CD4-positive, alpha-beta memory T cell (primary cell): ENCODE measurements at regions of chr11 and their contacts with region 1.

Region 1: DNA sequence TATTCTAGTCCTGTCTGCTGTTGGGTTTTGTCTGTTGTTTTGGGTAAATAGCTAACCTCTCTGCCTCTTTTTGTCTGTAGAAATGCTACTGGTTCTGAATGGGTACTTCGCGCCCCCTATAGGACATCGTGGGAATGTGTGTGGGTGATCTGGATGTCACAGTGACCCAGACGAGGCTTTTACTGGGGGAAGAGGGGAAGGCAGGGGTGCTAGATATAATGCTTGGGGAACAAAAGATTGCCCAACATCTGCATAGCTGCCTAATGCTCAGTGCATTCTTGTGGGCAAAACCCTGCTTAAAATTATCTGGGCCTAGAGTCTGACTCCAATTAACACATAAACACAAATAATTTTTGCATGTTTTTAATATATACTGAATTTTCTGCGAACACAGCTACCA is 57.7 kb downstream of the BMAL1 start:
- DNase-seq: peak; percentile 70 to 73 (median 71)
- H3K4me3 ChIP-seq: no peak overlapping the region
- H3K4me3 Mint-ChIP-seq: peak overlapping the region in 2 of 8 donors; percentile 2 to 9
- H3K27ac ChIP-seq: no peak overlapping the region
- H3K27ac Mint-ChIP-seq: peak overlapping the region; percentile 0 to 87 (median 26)
- H3K4me1 ChIP-seq: peaks cover 90% of the 10 kb centered on the region
- H3K4me1 Mint-ChIP-seq: peaks cover 60 to 89% (median 75%) of the 10 kb centered on the region in 4 donors
- H3K27me3 ChIP-seq: no peaks in the 10 kb centered on the region
- H3K27me3 Mint-ChIP-seq: no peaks in the 10 kb centered on the region

Region 2: DNA sequence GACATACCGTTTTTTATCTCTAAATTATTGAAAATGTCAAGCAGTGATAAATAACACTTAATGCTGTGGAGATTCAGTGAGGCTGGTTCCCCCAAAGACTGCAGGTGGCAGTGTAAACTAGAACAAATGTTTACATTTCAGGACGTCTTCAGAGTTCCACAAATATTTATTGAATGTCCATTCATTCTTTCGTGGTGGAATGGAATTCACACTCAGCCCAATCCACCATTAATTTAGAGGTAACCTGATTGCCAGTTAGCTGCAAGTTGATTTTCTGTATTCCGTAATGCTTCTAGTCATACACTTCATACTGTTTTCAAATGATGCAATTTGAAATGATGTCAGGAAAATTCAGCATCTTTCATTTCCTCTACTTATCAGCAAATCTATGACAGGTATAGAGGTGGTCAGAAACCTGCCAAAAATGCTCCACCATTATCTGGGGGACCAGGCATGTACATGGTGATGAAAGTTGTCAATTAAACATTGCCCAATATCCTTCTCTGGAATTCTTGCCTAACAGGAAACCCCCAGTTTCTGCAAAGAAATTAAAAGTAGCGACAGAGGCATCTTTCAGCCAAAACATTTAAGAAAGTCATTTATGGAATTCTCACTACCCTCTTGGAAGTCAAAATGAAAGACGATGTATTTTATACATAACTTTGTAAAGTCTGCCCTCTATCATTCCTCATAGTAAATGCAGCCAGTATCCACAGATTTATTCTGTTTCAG is 152.1 kb before region 1 on chr11:
- CTCF ChIA-PET with region 1: interaction called, 5 read pairs
- POLR2A ChIA-PET with region 1: no interaction called
- intact Hi-C with region 1: loop called (anchors 1 kb)
- DNase-seq: peak in 4 of 5 donors; percentile 12 to 32 (median 24)
- H3K4me3 ChIP-seq: no peak overlapping the region
- H3K4me3 Mint-ChIP-seq: peak overlapping the region in 7 of 8 donors; percentile 44 to 65 (median 60)
- H3K27ac ChIP-seq: no peak overlapping the region
- H3K27ac Mint-ChIP-seq: no peak overlapping the region
- H3K4me1 ChIP-seq: peaks cover 7% of the 10 kb centered on the region
- H3K4me1 Mint-ChIP-seq: peaks cover 3 to 6% (median 6%) of the 10 kb centered on the region in 4 donors
- H3K27me3 ChIP-seq: no peaks in the 10 kb centered on the region
- H3K27me3 Mint-ChIP-seq: peaks cover 8 to 12% of the 10 kb centered on the region in 2 donors

Region 3: DNA sequence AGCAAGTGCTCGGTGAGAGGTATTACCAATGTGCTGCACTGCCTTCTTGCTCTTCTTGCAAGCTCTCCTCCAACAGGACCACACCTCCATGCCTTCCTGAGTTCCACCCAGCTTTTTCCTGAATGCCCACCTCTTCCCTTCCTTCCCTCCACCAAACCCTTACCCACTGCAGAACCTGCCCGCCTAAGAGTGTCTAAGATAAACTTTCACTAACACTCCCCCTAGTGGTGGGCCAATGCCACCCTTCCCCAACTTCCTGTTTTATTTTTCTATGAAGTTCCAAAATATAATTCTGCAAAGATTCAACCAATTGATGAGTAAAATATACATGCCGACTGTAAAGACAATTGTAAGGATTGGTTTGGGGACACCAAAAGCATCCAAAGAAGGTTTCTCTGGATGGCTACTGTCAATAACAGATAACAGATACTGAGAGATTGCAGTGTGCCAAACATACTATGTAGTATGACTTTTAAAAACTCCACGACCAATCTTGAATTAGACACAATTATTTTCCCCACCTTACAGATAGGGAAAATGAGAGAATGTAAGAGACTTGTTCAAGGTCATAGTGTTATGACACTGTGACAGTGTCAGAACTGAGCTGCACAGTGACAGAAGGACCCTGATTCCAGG is 96.3 kb before region 1 on chr11:
- CTCF ChIA-PET with region 1: interaction called, 22 read pairs
- POLR2A ChIA-PET with region 1: no interaction called
- intact Hi-C with region 1: loop called (anchors 1 kb)
- DNase-seq: peak; percentile 45 to 61 (median 54)
- H3K4me3 ChIP-seq: no peak overlapping the region
- H3K4me3 Mint-ChIP-seq: no peak overlapping the region
- H3K27ac ChIP-seq: no peak overlapping the region
- H3K27ac Mint-ChIP-seq: peak overlapping the region in 1 of 7 donors; percentile 63
- H3K4me1 ChIP-seq: no peaks in the 10 kb centered on the region
- H3K4me1 Mint-ChIP-seq: peaks cover 0 to 3% (median 1%) of the 10 kb centered on the region in 4 donors
- H3K27me3 ChIP-seq: peaks cover 8% of the 10 kb centered on the region
- H3K27me3 Mint-ChIP-seq: peaks cover 7 to 15% of the 10 kb centered on the region in 2 donors

Region 4: GRCh38 chr11:13256216-13256615 is 79.1 kb before region 1 on chr11:
- CTCF ChIA-PET with region 1: interaction called, 28 read pairs
- POLR2A ChIA-PET with region 1: interaction called, 3 read pairs
- intact Hi-C with region 1: no loop called
- DNase-seq: no peak
- H3K4me3 ChIP-seq: no peak overlapping the region
- H3K4me3 Mint-ChIP-seq: no peak overlapping the region
- H3K27ac ChIP-seq: no peak overlapping the region
- H3K27ac Mint-ChIP-seq: no peak overlapping the region
- H3K4me1 ChIP-seq: peaks cover 10% of the 10 kb centered on the region
- H3K4me1 Mint-ChIP-seq: peaks cover 15 to 24% (median 20%) of the 10 kb centered on the region in 4 donors
- H3K27me3 ChIP-seq: no peaks in the 10 kb centered on the region
- H3K27me3 Mint-ChIP-seq: no peaks in the 10 kb centered on the region

Region 5: GRCh38 chr11:13276832-13277767 is 58.2 kb before region 1 on chr11:
- CTCF ChIA-PET with region 1: interaction called, 25 read pairs
- POLR2A ChIA-PET with region 1: interaction called, 8 read pairs
- intact Hi-C with region 1: loop called (anchors 2 kb)
- DNase-seq: peak; percentile 97 to 98 (median 98)
- H3K4me3 ChIP-seq: peak overlapping the region; percentile 83 to 95
- H3K4me3 Mint-ChIP-seq: peak overlapping the region; percentile 93 to 100 (median 98)
- H3K27ac ChIP-seq: peak overlapping the region; percentile 80
- H3K27ac Mint-ChIP-seq: peak overlapping the region; percentile 94 to 99 (median 96)
- H3K4me1 ChIP-seq: peaks cover 42% of the 10 kb centered on the region
- H3K4me1 Mint-ChIP-seq: peaks cover 33 to 52% (median 42%) of the 10 kb centered on the region in 4 donors
- H3K27me3 ChIP-seq: peaks cover 5% of the 10 kb centered on the region
- H3K27me3 Mint-ChIP-seq: peaks cover 0 to 2% of the 10 kb centered on the region in 2 donors

Region 6: GRCh38 chr11:13316528-13316961 is 18.8 kb before region 1 on chr11:
- CTCF ChIA-PET with region 1: interaction called, 20 read pairs
- POLR2A ChIA-PET with region 1: interaction called, 3 read pairs
- intact Hi-C with region 1: no loop called
- DNase-seq: no peak
- H3K4me3 ChIP-seq: no peak overlapping the region
- H3K4me3 Mint-ChIP-seq: peak overlapping the region in 3 of 8 donors; percentile 6 to 67 (median 26)
- H3K27ac ChIP-seq: no peak overlapping the region
- H3K27ac Mint-ChIP-seq: peak overlapping the region in 6 of 7 donors; percentile 22 to 85 (median 65)
- H3K4me1 ChIP-seq: peaks cover 97% of the 10 kb centered on the region
- H3K4me1 Mint-ChIP-seq: peaks cover 40 to 94% (median 73%) of the 10 kb centered on the region in 4 donors
- H3K27me3 ChIP-seq: no peaks in the 10 kb centered on the region
- H3K27me3 Mint-ChIP-seq: no peaks in the 10 kb centered on the region

Region 7: GRCh38 chr11:14454861-14455632 is 1119.7 kb after region 1 on chr11:
- CTCF ChIA-PET with region 1: no interaction called
- POLR2A ChIA-PET with region 1: no interaction called
- intact Hi-C with region 1: no loop called
- DNase-seq: peak in 4 of 5 donors; percentile 14 to 29 (median 18)
- H3K4me3 ChIP-seq: no peak overlapping the region
- H3K4me3 Mint-ChIP-seq: no peak overlapping the region
- H3K27ac ChIP-seq: no peak overlapping the region
- H3K27ac Mint-ChIP-seq: peak overlapping the region in 4 of 7 donors; percentile 22 to 63 (median 41)
- H3K4me1 ChIP-seq: no peaks in the 10 kb centered on the region
- H3K4me1 Mint-ChIP-seq: peaks cover 0 to 3% (median 1%) of the 10 kb centered on the region in 4 donors
- H3K27me3 ChIP-seq: no peaks in the 10 kb centered on the region
- H3K27me3 Mint-ChIP-seq: no peaks in the 10 kb centered on the region